ENCODE measurements at regions of chr1 and their contacts with region 1.

Region 1: DNA sequence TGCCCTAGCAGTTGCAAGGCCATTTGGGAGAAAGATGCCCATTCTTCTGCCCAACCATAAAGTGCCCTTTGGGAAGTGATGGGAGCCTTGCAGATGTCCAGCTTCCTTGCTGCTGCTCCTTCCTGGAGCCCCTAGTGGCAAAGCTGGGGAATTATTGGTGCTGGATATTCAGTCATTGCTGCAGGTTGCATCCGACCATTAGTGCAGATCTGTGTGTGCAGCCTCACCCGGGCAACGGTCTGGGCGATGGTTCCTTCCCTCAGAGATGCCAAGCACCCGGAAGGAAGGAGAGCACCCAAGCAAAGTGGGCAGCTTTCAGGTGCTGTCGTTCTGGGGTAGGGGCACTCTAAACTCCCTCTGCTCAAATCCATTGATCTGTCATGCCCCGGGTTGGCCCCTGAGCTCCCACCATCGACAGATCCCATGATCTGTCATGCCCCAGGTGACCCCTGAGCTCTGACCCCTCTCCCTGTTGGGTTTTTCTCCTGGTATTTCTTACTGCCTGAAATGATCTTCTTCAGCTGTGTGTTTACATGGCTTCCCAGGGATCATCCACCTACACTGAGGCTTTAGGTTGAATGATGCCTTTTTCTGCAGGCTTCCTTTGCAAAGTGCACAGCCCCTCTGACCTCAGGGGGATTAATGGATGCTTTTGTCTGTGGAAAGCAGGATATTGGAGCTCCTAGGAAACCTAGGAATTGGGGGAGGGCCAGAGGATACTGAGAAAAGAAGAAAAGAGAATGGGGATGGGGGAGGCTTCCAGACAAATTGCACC is 467.5 kb downstream of the PTPRU start:
- DNase-seq: no peak
- H3K4me3 ChIP-seq: no peak overlapping the region
- CTCF ChIP-seq: peak; percentile 86

Region 2: DNA sequence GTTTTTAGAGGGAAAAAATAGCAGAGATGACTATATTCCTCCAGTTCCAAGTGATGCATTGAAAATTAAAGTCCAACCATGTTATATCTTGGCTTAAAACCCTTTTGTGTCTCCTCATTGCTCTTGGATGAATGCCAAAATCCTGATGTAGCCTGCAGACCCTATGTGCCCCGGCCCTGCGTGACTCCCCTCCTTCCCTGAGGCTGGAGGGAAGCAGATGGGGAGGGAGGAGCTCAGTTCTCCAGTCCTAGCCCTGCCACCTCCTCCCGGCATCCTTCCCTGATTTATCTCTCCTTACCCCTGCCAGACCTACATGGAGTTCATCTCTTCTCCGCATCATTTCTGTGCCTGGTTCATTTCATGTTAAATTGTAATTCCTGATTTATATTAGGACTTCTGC is 70.0 kb before region 1 on chr1:
- CTCF ChIA-PET with region 1: no interaction called
- POLR2A ChIA-PET with region 1: no interaction called
- DNase-seq: no peak
- H3K4me3 ChIP-seq: no peak overlapping the region
- CTCF ChIP-seq: no peak

Region 3: DNA sequence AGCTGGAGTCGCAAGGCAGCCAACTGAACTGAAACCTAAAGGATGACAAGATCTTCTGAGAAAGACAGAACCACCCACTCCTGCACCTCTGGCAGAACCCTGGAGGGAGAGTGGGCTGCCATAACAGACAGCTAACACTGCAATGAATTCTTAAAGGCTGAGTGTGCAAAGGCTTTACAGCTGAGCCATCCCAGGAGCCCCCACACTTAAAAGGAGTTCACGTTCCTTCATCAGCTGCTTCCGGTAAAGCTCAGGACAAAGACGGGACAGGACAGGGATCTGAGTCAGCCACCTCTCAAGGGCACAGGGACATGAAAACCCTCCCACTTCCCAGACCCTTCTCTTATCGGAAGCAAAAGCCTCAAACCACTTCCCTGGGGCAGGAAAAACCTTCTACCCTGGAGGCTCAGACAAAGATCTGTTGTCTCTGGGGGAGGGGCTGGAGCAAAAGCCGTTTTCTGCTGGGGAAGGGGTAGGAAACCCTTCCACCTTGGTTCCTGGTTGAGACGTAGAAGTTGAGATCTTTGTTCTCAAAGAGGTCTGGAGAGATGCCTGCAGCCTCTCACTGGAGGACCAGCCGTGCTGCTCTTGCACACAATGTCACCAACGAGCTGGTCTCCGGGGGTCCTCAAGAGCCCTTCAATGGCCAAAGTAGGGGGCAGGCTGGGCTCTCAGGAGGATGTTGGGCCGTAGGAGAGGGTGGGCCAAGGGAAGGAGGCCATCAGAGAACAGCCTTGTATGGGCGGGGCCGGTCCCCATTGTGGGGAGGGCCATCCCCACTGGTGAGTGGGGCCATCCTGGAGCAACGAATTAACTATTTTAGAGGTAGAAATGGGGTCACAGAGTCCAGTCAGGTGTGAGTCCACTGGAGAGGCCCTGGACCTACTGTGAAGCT is 15.1 kb before region 1 on chr1:
- CTCF ChIA-PET with region 1: interaction called, 166 read pairs
- POLR2A ChIA-PET with region 1: no interaction called
- DNase-seq: no peak
- H3K4me3 ChIP-seq: peak overlapping the region; percentile 3; the same call in 1 of the 2 replicates
- CTCF ChIP-seq: no peak

Region 4: DNA sequence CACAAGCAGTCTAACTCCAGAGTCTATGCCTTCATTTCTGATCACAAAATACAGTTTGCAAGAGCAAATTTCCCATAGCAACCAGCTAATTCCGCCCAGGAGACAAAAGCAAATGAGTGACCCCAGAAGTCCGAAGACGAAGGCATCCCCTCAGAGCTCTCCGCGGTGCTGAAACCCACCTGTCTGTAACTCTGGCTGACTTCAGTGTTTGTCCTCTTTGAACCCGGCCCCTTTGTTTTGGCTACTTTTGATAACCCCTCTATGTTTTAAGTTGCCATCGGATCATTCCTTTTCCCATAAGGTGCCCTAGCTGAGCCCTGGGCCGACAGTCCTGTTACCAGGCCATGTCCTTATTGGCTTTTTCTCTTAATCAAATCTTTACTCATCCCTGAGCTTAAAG is 48.4 kb after region 1 on chr1:
- CTCF ChIA-PET with region 1: no interaction called
- POLR2A ChIA-PET with region 1: no interaction called
- DNase-seq: no peak
- H3K4me3 ChIP-seq: no peak overlapping the region
- CTCF ChIP-seq: no peak

Region 5: GRCh38 chr1:30111431-30111830 is 407.6 kb after region 1 on chr1:
- CTCF ChIA-PET with region 1: interaction called, 12 read pairs
- POLR2A ChIA-PET with region 1: no interaction called
- DNase-seq: no peak
- H3K4me3 ChIP-seq: no peak overlapping the region
- CTCF ChIP-seq: peak; percentile 66

Measured in AG04449 (cell line).